CD8-positive, alpha-beta T cell (primary cell): ENCODE measurements at regions of chr5 and their contacts with region 1.

Region 1: DNA sequence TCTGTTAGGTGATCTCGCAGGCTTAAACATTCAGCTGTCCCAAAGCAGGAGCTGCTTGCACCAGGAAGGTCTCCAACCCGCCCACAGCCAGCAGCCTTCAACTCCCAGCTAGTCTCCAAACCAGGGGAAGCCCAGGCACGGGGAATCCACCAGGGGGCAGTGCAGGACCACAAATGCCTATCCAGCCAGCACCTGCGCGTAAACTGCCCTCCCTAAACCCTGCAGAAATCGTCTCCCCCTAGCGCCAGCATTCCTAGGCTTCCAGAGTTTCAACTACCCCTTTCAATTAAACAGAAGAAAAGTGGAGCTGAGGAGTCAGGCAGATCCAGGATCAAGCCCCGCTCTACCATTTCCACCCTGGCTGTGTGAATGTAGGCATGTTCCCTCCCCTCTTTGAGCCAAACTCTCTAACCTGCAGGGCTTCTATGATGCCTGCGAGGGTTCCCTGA is 72.0 kb downstream of the HRH2 start:
- DNase-seq: peak; percentile 86 to 97 (median 89)
- ATAC-seq: peak; percentile 86
- H3K4me3 ChIP-seq: no peak overlapping the region
- H3K4me3 Mint-ChIP-seq: no peak overlapping the region
- H3K27ac ChIP-seq: no peak overlapping the region
- H3K27ac Mint-ChIP-seq: no peak overlapping the region
- H3K4me1 ChIP-seq: peaks cover 7% of the 10 kb centered on the region
- H3K4me1 Mint-ChIP-seq: peaks cover 8% of the 10 kb centered on the region
- H3K27me3 ChIP-seq: peaks cover 2 to 6% of the 10 kb centered on the region in 2 experiments
- H3K27me3 Mint-ChIP-seq: peaks cover 26% of the 10 kb centered on the region
- CTCF ChIP-seq: peak; percentile 91

Region 2: GRCh38 chr5:175681045-175681967 is 48.5 kb before region 1 on chr5:
- CTCF ChIA-PET with region 1: no interaction called
- POLR2A ChIA-PET with region 1: no interaction called
- intact Hi-C with region 1: no loop called
- DNase-seq: no peak
- ATAC-seq: no peak
- H3K4me3 ChIP-seq: no peak overlapping the region
- H3K4me3 Mint-ChIP-seq: no peak overlapping the region
- H3K27ac ChIP-seq: no peak overlapping the region
- H3K27ac Mint-ChIP-seq: no peak overlapping the region
- H3K4me1 ChIP-seq: peaks cover 21% of the 10 kb centered on the region
- H3K4me1 Mint-ChIP-seq: peaks cover 36% of the 10 kb centered on the region
- H3K27me3 ChIP-seq: no peaks in the 10 kb centered on the region
- H3K27me3 Mint-ChIP-seq: no peaks in the 10 kb centered on the region
- CTCF ChIP-seq: no peak

Region 3: GRCh38 chr5:175709276-175709781 is 20.5 kb before region 1 on chr5:
- CTCF ChIA-PET with region 1: interaction called, 12 read pairs
- POLR2A ChIA-PET with region 1: no interaction called
- intact Hi-C with region 1: no loop called
- DNase-seq: no peak
- ATAC-seq: no peak
- H3K4me3 ChIP-seq: no peak overlapping the region
- H3K4me3 Mint-ChIP-seq: no peak overlapping the region
- H3K27ac ChIP-seq: no peak overlapping the region
- H3K27ac Mint-ChIP-seq: no peak overlapping the region
- H3K4me1 ChIP-seq: no peaks in the 10 kb centered on the region
- H3K4me1 Mint-ChIP-seq: no peaks in the 10 kb centered on the region
- H3K27me3 ChIP-seq: no peaks in the 10 kb centered on the region
- H3K27me3 Mint-ChIP-seq: no peaks in the 10 kb centered on the region
- CTCF ChIP-seq: no peak

Region 4: GRCh38 chr5:175718401-175719108 is 11.3 kb before region 1 on chr5:
- CTCF ChIA-PET with region 1: interaction called, 28 read pairs
- POLR2A ChIA-PET with region 1: interaction called, 3 read pairs
- intact Hi-C with region 1: no loop called
- DNase-seq: peak in 7 of 9 experiments; percentile 39 to 58 (median 51)
- ATAC-seq: peak; percentile 46
- H3K4me3 ChIP-seq: no peak overlapping the region
- H3K4me3 Mint-ChIP-seq: no peak overlapping the region
- H3K27ac ChIP-seq: no peak overlapping the region
- H3K27ac Mint-ChIP-seq: no peak overlapping the region
- H3K4me1 ChIP-seq: no peaks in the 10 kb centered on the region
- H3K4me1 Mint-ChIP-seq: no peaks in the 10 kb centered on the region
- H3K27me3 ChIP-seq: no peaks in the 10 kb centered on the region
- H3K27me3 Mint-ChIP-seq: no peaks in the 10 kb centered on the region
- CTCF ChIP-seq: peak; percentile 57

Region 5: DNA sequence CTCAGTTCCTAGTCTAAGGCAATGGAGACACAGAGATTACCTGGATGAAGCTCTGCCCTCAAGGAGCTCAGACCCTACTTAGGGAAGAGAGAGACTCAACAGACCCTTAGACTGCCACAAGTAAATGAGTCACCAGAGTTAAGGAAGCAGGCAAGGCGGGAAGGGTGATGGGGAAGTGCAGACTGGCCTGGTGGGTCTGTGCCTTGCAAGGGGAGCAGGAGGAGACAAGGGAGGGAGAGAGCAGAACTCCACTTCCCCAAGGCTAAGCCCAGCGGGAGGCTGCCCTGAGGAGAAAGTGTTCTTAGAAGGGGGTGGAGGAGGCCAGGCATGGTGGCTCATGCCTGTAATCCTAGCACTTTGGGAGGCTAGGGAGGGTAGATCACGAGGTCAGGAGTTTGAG is 11.7 kb after region 1 on chr5:
- CTCF ChIA-PET with region 1: interaction called, 17 read pairs
- POLR2A ChIA-PET with region 1: no interaction called
- intact Hi-C with region 1: no loop called
- DNase-seq: peak in 1 of 9 experiments; percentile 23
- ATAC-seq: no peak
- H3K4me3 ChIP-seq: no peak overlapping the region
- H3K4me3 Mint-ChIP-seq: no peak overlapping the region
- H3K27ac ChIP-seq: no peak overlapping the region
- H3K27ac Mint-ChIP-seq: no peak overlapping the region
- H3K4me1 ChIP-seq: no peaks in the 10 kb centered on the region
- H3K4me1 Mint-ChIP-seq: no peaks in the 10 kb centered on the region
- H3K27me3 ChIP-seq: no peaks in the 10 kb centered on the region
- H3K27me3 Mint-ChIP-seq: peaks cover 28% of the 10 kb centered on the region
- CTCF ChIP-seq: no peak

Region 6: DNA sequence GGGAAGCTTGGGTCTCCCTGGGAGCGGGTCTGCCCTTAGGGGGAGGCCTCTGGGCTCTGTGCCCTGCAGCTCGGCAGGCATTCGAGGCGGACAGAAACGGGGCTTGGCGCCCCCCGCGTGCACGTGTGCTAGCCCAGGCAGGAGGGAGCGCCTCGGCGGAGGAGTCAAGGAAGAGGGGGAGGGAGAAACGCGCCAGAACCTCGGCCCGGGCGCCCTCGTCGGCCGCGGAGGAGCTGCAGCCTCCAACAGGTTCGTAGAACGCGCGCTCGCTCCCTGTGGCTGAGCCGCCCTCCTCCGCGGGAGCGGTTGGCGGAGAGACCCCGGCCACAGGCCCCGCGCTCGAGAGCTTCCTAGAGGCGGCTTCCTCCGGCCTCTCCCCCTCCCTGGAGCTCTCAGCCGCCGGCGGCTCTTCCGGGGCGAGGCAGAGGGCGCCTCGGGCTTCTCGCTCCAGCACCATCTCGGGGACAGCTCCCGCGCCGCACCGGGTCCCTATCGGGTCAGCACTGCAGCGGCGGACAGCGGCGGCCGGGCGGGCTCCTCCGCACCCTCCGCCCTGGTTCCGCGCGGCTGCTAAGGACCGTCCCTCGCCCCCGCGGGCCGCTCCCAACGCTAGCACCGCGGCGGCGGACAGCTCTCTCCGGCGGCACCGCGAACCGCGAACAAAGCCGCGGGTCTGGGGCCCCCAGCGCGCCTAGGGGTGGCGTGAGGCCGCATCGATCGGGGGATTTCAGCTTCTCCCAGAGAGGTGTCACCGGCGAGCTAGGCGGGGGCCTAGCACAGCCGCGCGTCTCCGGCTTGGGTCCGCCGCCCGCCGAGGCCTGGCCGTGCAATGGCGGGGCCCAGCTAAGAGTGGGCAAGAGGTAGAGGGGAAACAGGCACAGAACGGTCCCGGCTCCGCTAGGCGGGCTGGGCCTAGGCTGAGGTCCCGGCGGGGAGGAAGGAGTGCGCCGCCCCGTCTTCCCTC is 67.0 kb after region 1 on chr5:
- CTCF ChIA-PET with region 1: no interaction called
- POLR2A ChIA-PET with region 1: no interaction called
- intact Hi-C with region 1: no loop called
- DNase-seq: peak; percentile 59 to 85 (median 79)
- ATAC-seq: peak; percentile 100
- H3K4me3 ChIP-seq: peak overlapping the region in 1 of 2 experiments; percentile 16
- H3K4me3 Mint-ChIP-seq: no peak overlapping the region
- H3K27ac ChIP-seq: no peak overlapping the region
- H3K27ac Mint-ChIP-seq: no peak overlapping the region
- H3K4me1 ChIP-seq: peaks cover 11% of the 10 kb centered on the region
- H3K4me1 Mint-ChIP-seq: peaks cover 9% of the 10 kb centered on the region
- H3K27me3 ChIP-seq: peaks cover 15 to 26% of the 10 kb centered on the region in 2 experiments
- H3K27me3 Mint-ChIP-seq: peaks cover 76% of the 10 kb centered on the region
- CTCF ChIP-seq: no peak

Region 7: DNA sequence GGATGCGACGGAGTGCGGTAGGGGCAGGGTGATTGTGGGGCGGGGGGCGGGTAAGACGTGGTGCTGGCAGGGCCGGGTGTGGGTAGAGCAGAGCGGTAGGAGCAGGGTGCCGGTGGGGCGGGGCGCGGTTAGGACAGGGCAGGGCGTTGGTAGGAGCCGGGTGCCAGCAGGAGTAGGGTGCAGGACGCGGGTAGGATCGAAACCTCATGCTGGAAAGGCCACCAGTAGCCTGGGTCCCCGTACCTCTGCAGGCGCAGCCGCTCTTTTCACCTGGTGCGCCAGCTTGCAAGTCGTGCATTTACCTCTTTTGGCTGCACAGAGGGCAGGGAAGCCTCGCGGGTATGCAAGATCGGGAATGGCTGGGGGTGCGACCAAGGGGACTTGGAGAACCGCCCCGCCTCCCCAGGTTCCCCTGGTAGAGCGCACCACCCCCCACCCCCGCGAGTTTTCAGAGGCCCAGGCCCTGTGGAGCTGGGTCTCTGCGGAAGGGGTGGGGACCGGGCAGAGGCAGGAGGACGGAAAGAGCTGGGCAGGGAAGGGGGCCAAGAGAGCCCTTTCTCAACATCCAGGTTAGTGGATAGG is 403.5 kb after region 1 on chr5:
- CTCF ChIA-PET with region 1: no interaction called
- POLR2A ChIA-PET with region 1: no interaction called
- intact Hi-C with region 1: no loop called
- DNase-seq: peak in 2 of 9 experiments; percentile 23 to 26
- ATAC-seq: no peak
- H3K4me3 ChIP-seq: peak overlapping the region; percentile 29 to 50
- H3K4me3 Mint-ChIP-seq: peak overlapping the region; percentile 77
- H3K27ac ChIP-seq: no peak overlapping the region
- H3K27ac Mint-ChIP-seq: no peak overlapping the region
- H3K4me1 ChIP-seq: peaks cover 6% of the 10 kb centered on the region
- H3K4me1 Mint-ChIP-seq: peaks cover 14% of the 10 kb centered on the region
- H3K27me3 ChIP-seq: no peaks in the 10 kb centered on the region
- H3K27me3 Mint-ChIP-seq: peaks cover 32% of the 10 kb centered on the region
- CTCF ChIP-seq: no peak

Region 8: GRCh38 chr5:176596689-176597416 is 867.0 kb after region 1 on chr5:
- CTCF ChIA-PET with region 1: no interaction called
- POLR2A ChIA-PET with region 1: no interaction called
- intact Hi-C with region 1: loop called (anchors 5 kb)
- DNase-seq: peak; percentile 44 to 84 (median 66)
- ATAC-seq: peak; percentile 81
- H3K4me3 ChIP-seq: peak overlapping the region; percentile 36 to 52
- H3K4me3 Mint-ChIP-seq: peak overlapping the region; percentile 77
- H3K27ac ChIP-seq: no peak overlapping the region
- H3K27ac Mint-ChIP-seq: no peak overlapping the region
- H3K4me1 ChIP-seq: peaks cover 9% of the 10 kb centered on the region
- H3K4me1 Mint-ChIP-seq: peaks cover 7% of the 10 kb centered on the region
- H3K27me3 ChIP-seq: no peaks in the 10 kb centered on the region
- H3K27me3 Mint-ChIP-seq: no peaks in the 10 kb centered on the region
- CTCF ChIP-seq: no peak

Region 9: DNA sequence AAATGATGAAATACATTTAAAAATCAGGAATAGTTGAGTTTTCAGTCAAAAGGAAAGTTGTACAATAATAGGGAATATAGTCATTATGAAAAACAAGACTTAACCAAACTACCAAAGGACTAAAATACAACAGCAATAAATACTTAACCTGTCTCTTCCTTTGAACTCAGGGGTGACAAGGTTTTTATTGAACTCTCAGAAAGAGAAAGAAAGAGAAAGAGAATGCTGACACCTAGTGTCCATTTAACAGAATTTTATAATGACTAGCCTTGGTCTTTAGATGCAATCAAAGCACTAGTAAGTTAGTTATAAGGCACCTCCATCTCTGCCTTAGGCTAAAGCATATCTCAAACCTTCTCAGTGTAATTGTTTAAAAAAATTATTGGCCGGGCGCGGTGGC is 1229.2 kb after region 1 on chr5:
- CTCF ChIA-PET with region 1: no interaction called
- POLR2A ChIA-PET with region 1: no interaction called
- intact Hi-C with region 1: loop called in 1 of 2 experiments (anchors 2 kb)
- DNase-seq: peak in 2 of 9 experiments; percentile 51 to 64
- ATAC-seq: peak; percentile 64
- H3K4me3 ChIP-seq: no peak overlapping the region
- H3K4me3 Mint-ChIP-seq: no peak overlapping the region
- H3K27ac ChIP-seq: no peak overlapping the region
- H3K27ac Mint-ChIP-seq: no peak overlapping the region
- H3K4me1 ChIP-seq: no peaks in the 10 kb centered on the region
- H3K4me1 Mint-ChIP-seq: peaks cover 6% of the 10 kb centered on the region
- H3K27me3 ChIP-seq: no peaks in the 10 kb centered on the region
- H3K27me3 Mint-ChIP-seq: no peaks in the 10 kb centered on the region
- CTCF ChIP-seq: peak; percentile 56